OCI-LY7 (cell line): ENCODE measurements at regions of chr7 and their contacts with region 1.

Region 1: DNA sequence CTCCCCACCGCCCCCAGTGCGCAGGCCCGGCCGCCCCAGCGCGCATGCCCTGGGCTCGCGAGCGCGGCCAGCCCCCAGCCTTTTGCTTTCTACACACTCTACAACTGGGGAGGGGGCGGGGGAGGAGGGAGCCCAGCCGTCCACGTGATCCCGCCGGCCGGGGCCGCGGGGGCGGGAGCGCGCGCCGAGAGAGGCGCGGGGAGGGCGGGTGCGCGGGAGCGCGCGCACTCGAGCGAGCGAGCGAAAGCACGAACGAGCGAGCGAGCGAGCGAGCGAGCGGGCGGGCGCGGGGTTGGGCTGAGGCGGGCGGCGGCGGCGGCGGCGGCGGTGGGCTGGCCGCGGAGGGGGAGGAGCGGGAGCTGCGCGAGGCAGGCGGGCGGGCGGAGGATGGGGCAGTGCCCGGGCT is at the start of gene AUTS2:
- DNase-seq: peak; percentile 94
- H3K4me3 ChIP-seq: peak within 1 kb of the TSS; percentile 97
- H3K27ac ChIP-seq: peak within 1 kb of the TSS; percentile 58
- H3K4me1 ChIP-seq: peaks cover 35% of the 10 kb centered on the region
- CTCF ChIP-seq: no peak
- total RNA-seq, gene AUTS2: 34.3 and 37.9 TPM in 2 replicates

Region 2: DNA sequence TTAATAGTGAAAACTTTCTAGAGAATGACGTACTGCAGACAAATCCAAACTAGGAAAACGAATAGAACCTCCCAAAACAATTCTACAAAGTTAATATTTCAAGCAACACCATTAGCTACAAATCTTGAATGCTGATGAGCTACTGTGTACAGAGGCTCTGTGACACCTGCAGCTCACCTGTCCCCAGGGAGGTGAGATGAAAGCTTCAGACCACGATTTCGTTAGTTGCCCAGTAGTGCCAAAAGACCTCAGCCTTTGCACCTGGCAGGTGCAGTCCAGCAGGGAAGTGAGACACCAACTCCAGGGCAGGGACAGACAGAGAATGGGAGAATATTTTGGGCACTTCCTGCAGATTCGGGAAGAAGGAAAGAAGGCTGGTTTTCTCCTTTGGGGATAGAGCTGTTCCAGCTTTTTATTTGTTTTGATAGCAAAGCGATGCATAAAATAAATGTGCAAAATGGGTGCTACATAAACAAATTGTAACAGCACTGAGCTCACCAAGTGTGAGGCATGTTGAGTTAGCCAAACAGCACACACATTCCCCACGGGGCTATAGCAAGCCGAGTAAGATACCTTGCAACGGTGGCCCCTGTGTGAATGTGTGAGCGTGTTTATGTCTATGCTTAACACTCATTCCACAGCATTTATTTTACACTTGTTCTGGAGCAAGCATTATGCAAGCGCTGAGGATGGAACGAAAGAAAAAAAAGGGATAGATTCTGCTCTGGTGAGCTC is 1024.6 kb before region 1 on chr7:
- CTCF ChIA-PET with region 1: no interaction called
- POLR2A ChIA-PET with region 1: no interaction called
- intact Hi-C with region 1: loop called (anchors 10 kb)
- DNase-seq: peak; percentile 98
- H3K4me3 ChIP-seq: peak overlapping the region; percentile 48
- H3K27ac ChIP-seq: peak overlapping the region; percentile 96
- H3K4me1 ChIP-seq: peaks cover 68% of the 10 kb centered on the region
- CTCF ChIP-seq: no peak

Region 3: GRCh38 chr7:69498671-69499070 is 99.4 kb before region 1 on chr7:
- CTCF ChIA-PET with region 1: no interaction called
- POLR2A ChIA-PET with region 1: interaction called, 3 read pairs
- intact Hi-C with region 1: loop called (anchors 5 kb)
- DNase-seq: no peak
- H3K4me3 ChIP-seq: no peak overlapping the region
- H3K27ac ChIP-seq: no peak overlapping the region
- H3K4me1 ChIP-seq: peaks cover 41% of the 10 kb centered on the region
- CTCF ChIP-seq: no peak

Region 4: GRCh38 chr7:69631131-69631530 is 33.0 kb after region 1 on chr7:
- CTCF ChIA-PET with region 1: no interaction called
- POLR2A ChIA-PET with region 1: no interaction called
- intact Hi-C with region 1: no loop called
- DNase-seq: peak; percentile 37
- H3K4me3 ChIP-seq: no peak overlapping the region
- H3K27ac ChIP-seq: no peak overlapping the region
- H3K4me1 ChIP-seq: peaks cover 33% of the 10 kb centered on the region
- CTCF ChIP-seq: peak; percentile 25; the same call in 1 of the 2 replicates

Region 5: GRCh38 chr7:69757981-69758430 is 159.9 kb after region 1 on chr7:
- CTCF ChIA-PET with region 1: no interaction called
- POLR2A ChIA-PET with region 1: interaction called, 4 read pairs
- intact Hi-C with region 1: loop called (anchors 5 kb)
- DNase-seq: no peak
- H3K4me3 ChIP-seq: no peak overlapping the region
- H3K27ac ChIP-seq: no peak overlapping the region
- H3K4me1 ChIP-seq: peaks cover 72% of the 10 kb centered on the region
- CTCF ChIP-seq: no peak

Region 6: DNA sequence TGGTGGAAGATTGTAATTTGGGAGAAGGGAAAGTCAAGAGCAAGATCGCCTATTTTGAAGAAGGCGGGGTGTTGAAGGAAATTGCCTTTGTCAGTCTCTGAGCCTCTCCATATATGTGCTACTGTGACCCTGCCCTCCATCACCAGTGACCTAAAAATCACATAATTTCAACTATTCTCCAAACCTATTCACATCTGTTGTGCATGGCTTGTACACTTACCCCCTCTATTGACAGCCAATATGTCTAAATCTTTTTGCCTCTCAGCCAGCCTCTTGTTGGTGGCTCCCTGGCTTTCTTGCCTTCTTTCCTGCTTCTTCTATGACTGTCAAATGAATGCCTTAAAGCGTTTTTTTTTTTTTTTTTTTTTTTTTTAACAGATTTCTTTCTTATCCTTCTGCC is 295.8 kb after region 1 on chr7:
- CTCF ChIA-PET with region 1: no interaction called
- POLR2A ChIA-PET with region 1: no interaction called
- intact Hi-C with region 1: loop called (anchors 5 kb)
- DNase-seq: peak; percentile 67
- H3K4me3 ChIP-seq: no peak overlapping the region
- H3K27ac ChIP-seq: peak overlapping the region; percentile 20
- H3K4me1 ChIP-seq: peaks cover 83% of the 10 kb centered on the region
- CTCF ChIP-seq: peak; percentile 76